ENCODE measurements at regions of chr1 and their contacts with region 1.

Region 1: GRCh38 chr1:150186789-150187559 is 37.3 kb downstream of the PLEKHO1 start:
- DNase-seq: peak; percentile 22
- H3K4me3 Mint-ChIP-seq: peak overlapping the region; percentile 15
- H3K27ac Mint-ChIP-seq: peak overlapping the region; percentile 9
- H3K4me1 Mint-ChIP-seq: peaks cover 12% of the 10 kb centered on the region
- H3K27me3 Mint-ChIP-seq: no peaks in the 10 kb centered on the region

Region 2: GRCh38 chr1:149962123-149962548 is 224.8 kb before region 1 on chr1:
- CTCF ChIA-PET with region 1: interaction called, 15 read pairs
- intact Hi-C with region 1: loop called (anchors 1 kb)
- DNase-seq: peak; percentile 63
- H3K4me3 Mint-ChIP-seq: no peak overlapping the region
- H3K27ac Mint-ChIP-seq: no peak overlapping the region
- H3K4me1 Mint-ChIP-seq: peaks cover 12% of the 10 kb centered on the region
- H3K27me3 Mint-ChIP-seq: no peaks in the 10 kb centered on the region

Region 3: GRCh38 chr1:150051089-150051373 is 135.9 kb before region 1 on chr1:
- CTCF ChIA-PET with region 1: interaction called, 5 read pairs
- intact Hi-C with region 1: loop called (anchors 2 kb)
- DNase-seq: no peak
- H3K4me3 Mint-ChIP-seq: no peak overlapping the region
- H3K27ac Mint-ChIP-seq: no peak overlapping the region
- H3K4me1 Mint-ChIP-seq: peaks cover 2% of the 10 kb centered on the region
- H3K27me3 Mint-ChIP-seq: no peaks in the 10 kb centered on the region

Region 4: GRCh38 chr1:150067184-150068036 is 119.6 kb before region 1 on chr1 and contains the start of gene VPS45:
- CTCF ChIA-PET with region 1: interaction called, 43 read pairs
- intact Hi-C with region 1: no loop called
- DNase-seq: peak; percentile 90
- H3K4me3 Mint-ChIP-seq: peak within 1 kb of the TSS; percentile 94
- H3K27ac Mint-ChIP-seq: peak within 1 kb of the TSS; percentile 90
- H3K4me1 Mint-ChIP-seq: peaks cover 29% of the 10 kb centered on the region
- H3K27me3 Mint-ChIP-seq: no peaks in the 10 kb centered on the region
- total RNA-seq, gene VPS45: 21.2 to 23.6 TPM

Region 5: DNA sequence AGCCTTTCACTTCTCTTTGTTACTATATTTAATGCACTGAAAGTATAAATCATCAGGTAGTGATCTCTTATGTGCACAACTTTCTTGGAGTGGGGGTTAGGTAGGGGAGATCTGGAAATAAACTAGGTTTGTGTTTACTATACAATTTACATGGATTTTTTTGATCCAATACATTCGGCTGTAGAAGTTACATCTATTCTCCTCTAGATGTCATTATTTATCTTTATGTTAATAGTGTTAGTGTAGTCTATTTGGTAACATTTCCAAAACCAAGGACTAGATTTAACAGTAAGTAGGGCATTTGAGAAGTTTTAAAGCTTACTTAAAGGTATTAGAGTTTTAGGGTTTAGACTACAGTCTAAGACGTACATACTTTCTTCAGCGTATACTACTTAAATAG is 114.0 kb before region 1 on chr1:
- CTCF ChIA-PET with region 1: interaction called, 43 read pairs
- intact Hi-C with region 1: loop called (anchors 1 kb)
- DNase-seq: no peak
- H3K4me3 Mint-ChIP-seq: no peak overlapping the region
- H3K27ac Mint-ChIP-seq: no peak overlapping the region
- H3K4me1 Mint-ChIP-seq: peaks cover 23% of the 10 kb centered on the region
- H3K27me3 Mint-ChIP-seq: no peaks in the 10 kb centered on the region

Region 6: DNA sequence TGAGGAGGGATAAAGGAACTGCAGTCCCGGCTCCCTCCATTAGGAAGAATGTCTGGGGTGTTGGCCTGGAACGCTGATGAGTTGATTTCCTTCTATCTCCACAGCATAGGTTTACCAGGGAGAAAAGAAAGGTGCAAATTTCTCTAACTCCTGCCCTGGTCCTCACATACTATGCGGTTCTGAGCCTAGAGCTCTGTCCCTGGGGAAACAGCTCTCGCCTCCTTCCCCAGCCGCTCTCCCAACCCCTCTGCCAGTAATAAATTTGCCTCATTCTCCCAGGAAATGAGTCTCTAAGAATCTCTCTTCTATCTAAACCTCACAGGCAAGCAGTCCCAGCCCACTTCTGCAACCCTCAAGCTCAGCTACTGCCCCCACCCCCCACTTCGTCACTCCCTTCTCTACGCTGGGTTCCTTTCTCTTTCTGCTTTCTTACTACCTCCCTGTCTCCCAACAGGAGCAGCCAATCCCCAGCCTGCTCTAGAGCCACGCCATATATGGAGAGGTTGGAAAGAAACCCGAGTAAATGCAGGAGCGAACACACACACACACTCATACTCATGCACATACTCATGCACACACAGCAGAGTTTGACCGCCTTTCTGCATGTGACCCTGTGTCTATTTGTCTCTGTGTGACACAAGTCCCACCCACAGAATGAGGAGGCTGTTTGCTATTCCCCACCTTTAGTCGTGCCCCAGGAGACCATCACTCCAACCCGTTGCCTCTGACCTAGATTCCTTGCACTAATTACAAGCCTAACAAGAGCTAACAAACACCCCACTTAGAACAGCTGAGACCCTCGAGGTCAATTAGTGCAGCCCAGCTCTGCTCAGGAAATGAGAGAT is 23.9 kb before region 1 on chr1:
- CTCF ChIA-PET with region 1: interaction called, 28 read pairs
- intact Hi-C with region 1: loop called (anchors 2 kb)
- DNase-seq: peak; percentile 49
- H3K4me3 Mint-ChIP-seq: peak overlapping the region; percentile 16
- H3K27ac Mint-ChIP-seq: no peak overlapping the region
- H3K4me1 Mint-ChIP-seq: peaks cover 42% of the 10 kb centered on the region
- H3K27me3 Mint-ChIP-seq: no peaks in the 10 kb centered on the region

Region 7: DNA sequence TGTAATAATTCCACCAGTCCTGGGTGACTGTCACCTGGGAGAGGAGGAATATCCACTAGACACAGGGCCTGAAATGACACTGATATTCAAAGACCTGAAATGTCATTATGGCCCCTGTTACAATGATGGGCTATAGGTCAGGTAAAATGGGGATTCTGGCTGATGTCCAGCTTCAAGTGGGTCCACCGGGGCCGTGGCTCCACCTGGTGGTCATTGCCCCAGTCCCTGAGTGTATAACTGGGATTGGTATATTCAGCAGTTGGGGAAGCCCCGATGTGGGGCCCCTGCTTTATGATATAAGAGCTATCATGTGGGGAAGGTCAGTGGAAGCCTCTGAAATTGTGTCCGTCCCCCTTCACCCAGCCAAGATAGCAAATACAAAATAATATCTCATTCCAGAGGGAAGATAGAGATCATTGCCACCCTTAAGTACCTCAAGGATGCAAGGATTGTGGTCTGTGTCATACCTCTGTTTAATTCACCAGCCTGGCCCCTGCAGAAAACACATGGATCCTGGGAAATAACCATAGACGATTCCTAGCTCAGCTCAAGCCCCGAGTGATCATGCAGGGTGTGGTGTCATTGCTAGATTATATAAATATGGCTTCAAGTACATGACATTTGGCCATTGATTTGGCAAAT is 17.9 kb before region 1 on chr1:
- CTCF ChIA-PET with region 1: interaction called, 28 read pairs
- intact Hi-C with region 1: no loop called
- DNase-seq: peak; percentile 72
- H3K4me3 Mint-ChIP-seq: no peak overlapping the region
- H3K27ac Mint-ChIP-seq: no peak overlapping the region
- H3K4me1 Mint-ChIP-seq: no peaks in the 10 kb centered on the region
- H3K27me3 Mint-ChIP-seq: no peaks in the 10 kb centered on the region

Region 8: DNA sequence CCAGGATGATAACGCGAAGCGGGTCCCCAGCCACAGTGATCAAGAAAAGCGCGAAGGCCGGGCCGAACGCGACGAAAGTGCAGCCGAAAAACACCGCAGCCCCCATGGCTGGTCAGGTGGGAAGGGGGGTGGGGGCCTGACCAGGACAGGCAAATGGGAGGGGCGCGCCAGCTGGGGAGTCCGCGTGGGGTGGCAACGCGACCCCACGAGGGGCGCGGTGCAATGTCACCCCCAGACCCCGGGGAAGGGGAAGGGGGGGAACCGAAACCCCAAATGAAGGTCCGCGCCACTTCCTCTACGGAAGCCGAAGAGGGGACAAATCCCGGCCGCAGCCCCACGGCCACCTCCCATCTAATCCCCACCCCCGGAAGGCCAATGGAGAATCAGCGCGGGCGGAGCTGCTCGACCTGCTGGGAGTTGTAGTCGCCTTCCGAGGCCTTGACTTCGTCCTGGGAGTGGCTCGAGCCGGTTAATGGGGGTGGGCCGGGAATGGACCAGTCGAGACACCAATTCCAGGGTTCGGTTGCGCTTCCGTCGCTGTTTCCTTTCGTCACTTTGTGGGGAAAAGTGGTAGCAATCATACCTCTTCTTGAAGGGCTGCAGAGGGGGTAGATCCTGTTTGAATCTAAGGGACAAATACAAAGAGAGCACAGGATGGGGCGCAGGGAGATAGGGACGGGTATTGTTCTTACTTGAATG is 81.9 kb after region 1 on chr1 and contains the start of gene APH1A:
- CTCF ChIA-PET with region 1: no interaction called
- intact Hi-C with region 1: no loop called
- DNase-seq: peak; percentile 98
- H3K4me3 Mint-ChIP-seq: peak within 1 kb of the TSS; percentile 89
- H3K27ac Mint-ChIP-seq: peak within 1 kb of the TSS; percentile 96
- H3K4me1 Mint-ChIP-seq: peaks cover 23% of the 10 kb centered on the region
- H3K27me3 Mint-ChIP-seq: no peaks in the 10 kb centered on the region
- total RNA-seq, gene APH1A: 71.2 to 75.7 TPM

Measured in activated naive CD4-positive, alpha-beta T cell treated with anti-CD3 and anti-CD28 coated beads for 36 hours (primary cell).